Activated CD4-positive, alpha-beta memory T cell treated with anti-CD3 and anti-CD28 coated beads, Interleukin-2, amount 10 ng/mL, durations not matched to agents 7 days and 5 days (primary cell): ENCODE measurements at regions of chr16 and their contacts with region 1.

Region 1: GRCh38 chr16:70349783-70350182 is 3.1 kb downstream of the DDX19A start:
- DNase-seq: no peak
- H3K4me3 Mint-ChIP-seq: no peak overlapping the region
- H3K27ac Mint-ChIP-seq: no peak overlapping the region
- H3K4me1 Mint-ChIP-seq: peaks cover 38% of the 10 kb centered on the region
- H3K27me3 Mint-ChIP-seq: no peaks in the 10 kb centered on the region

Region 2: GRCh38 chr16:70289229-70290098 is 60.3 kb before region 1 on chr16 and contains the start of gene AARS1:
- CTCF ChIA-PET with region 1: interaction called, 4 read pairs
- POLR2A ChIA-PET with region 1: interaction called, 55 read pairs
- DNase-seq: peak; percentile 96
- H3K4me3 Mint-ChIP-seq: peak within 1 kb of the TSS; percentile 99
- H3K27ac Mint-ChIP-seq: peak within 1 kb of the TSS; percentile 98
- H3K4me1 Mint-ChIP-seq: peaks cover 32% of the 10 kb centered on the region
- H3K27me3 Mint-ChIP-seq: no peaks in the 10 kb centered on the region
- total RNA-seq, gene AARS1: 128 to 129 TPM

Region 3: GRCh38 chr16:70306880-70307279 is 42.9 kb before region 1 on chr16:
- CTCF ChIA-PET with region 1: no interaction called
- POLR2A ChIA-PET with region 1: interaction called, 13 read pairs
- DNase-seq: no peak
- H3K4me3 Mint-ChIP-seq: no peak overlapping the region
- H3K27ac Mint-ChIP-seq: no peak overlapping the region
- H3K4me1 Mint-ChIP-seq: peaks cover 12% of the 10 kb centered on the region
- H3K27me3 Mint-ChIP-seq: no peaks in the 10 kb centered on the region

Region 4: DNA sequence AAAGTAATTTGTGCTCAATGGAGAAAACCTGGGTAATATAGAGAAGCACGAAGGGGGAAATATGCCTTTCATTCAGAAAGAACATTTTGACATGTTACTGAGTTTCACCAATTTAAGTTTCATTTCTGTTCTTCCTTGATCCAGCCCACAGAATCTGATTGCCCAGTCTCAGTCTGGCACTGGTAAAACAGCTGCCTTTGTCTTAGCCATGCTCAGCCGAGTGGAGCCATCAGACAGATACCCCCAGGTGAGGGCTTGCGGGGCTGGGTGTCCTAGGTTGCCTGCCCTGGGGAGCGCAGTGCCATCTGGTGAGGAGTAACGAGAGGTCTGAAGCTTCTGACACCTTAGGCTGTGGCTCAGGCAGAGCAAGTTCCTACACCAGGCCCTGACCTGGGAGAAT is 14.6 kb after region 1 on chr16:
- CTCF ChIA-PET with region 1: interaction called, 5 read pairs
- POLR2A ChIA-PET with region 1: interaction called, 16 read pairs
- DNase-seq: no peak
- H3K4me3 Mint-ChIP-seq: no peak overlapping the region
- H3K27ac Mint-ChIP-seq: peak overlapping the region; percentile 6
- H3K4me1 Mint-ChIP-seq: peaks cover 4% of the 10 kb centered on the region
- H3K27me3 Mint-ChIP-seq: no peaks in the 10 kb centered on the region

Region 5: GRCh38 chr16:70523076-70523742 is 173.4 kb after region 1 on chr16 and contains the start of gene COG4:
- CTCF ChIA-PET with region 1: interaction called, 3 read pairs
- POLR2A ChIA-PET with region 1: interaction called, 24 read pairs
- DNase-seq: peak; percentile 92
- H3K4me3 Mint-ChIP-seq: peak within 1 kb of the TSS; percentile 93
- H3K27ac Mint-ChIP-seq: peak within 1 kb of the TSS; percentile 95
- H3K4me1 Mint-ChIP-seq: peaks cover 45% of the 10 kb centered on the region
- H3K27me3 Mint-ChIP-seq: no peaks in the 10 kb centered on the region
- total RNA-seq, gene COG4: 71.2 to 71.4 TPM

Region 6: DNA sequence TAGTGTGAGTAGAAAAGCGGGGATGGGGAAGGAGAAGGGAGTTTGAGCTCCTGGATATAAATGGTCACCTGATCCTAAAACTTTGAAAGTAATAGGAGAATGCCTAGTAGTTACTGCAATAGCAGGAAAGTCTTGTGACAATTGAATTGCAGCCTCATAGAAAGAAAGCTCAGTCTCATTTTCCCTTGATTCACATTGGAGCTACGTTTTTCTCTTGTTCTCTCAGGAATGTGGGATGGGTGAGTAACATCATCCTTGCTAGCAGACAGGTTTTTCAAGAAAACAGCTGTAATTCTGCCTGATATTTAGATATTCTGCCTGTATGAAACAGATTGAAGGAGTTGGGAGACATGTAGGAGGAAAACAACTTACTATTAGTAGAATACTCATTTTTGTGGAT is 199.2 kb after region 1 on chr16:
- CTCF ChIA-PET with region 1: no interaction called
- POLR2A ChIA-PET with region 1: no interaction called
- DNase-seq: no peak
- H3K4me3 Mint-ChIP-seq: no peak overlapping the region
- H3K27ac Mint-ChIP-seq: no peak overlapping the region
- H3K4me1 Mint-ChIP-seq: peaks cover 12% of the 10 kb centered on the region
- H3K27me3 Mint-ChIP-seq: no peaks in the 10 kb centered on the region